Activated T-helper 2 cell treated with anti-CD3 and anti-CD28 coated beads, Interferon-gamma antibody, Interleukin-2, Interleukin-4, amounts not matched to agents 10 μg/mL and 5 μg/mL and 100 μg/mL, durations not matched to agents 14 hours and 24 hours and 36 hours (primary cell): ENCODE measurements at regions of chr15 and their contacts with region 1.

Region 1: GRCh38 chr15:63188926-63189871 is at the start of gene RAB8B:
- DNase-seq: peak; percentile 96
- H3K4me3 Mint-ChIP-seq: peak within 1 kb of the TSS; percentile 96
- H3K27ac Mint-ChIP-seq: peak within 1 kb of the TSS; percentile 90
- H3K4me1 Mint-ChIP-seq: peaks cover 40% of the 10 kb centered on the region
- H3K27me3 Mint-ChIP-seq: no peaks in the 10 kb centered on the region
- total RNA-seq, gene RAB8B: 214 TPM in 2 replicates

Region 2: GRCh38 chr15:63122002-63122893 is 67.0 kb before region 1 on chr15:
- intact Hi-C with region 1: loop called (anchors 1 kb)
- DNase-seq: peak; percentile 77
- H3K4me3 Mint-ChIP-seq: peak overlapping the region; percentile 91
- H3K27ac Mint-ChIP-seq: peak overlapping the region; percentile 47
- H3K4me1 Mint-ChIP-seq: peaks cover 8% of the 10 kb centered on the region
- H3K27me3 Mint-ChIP-seq: peaks cover 1% of the 10 kb centered on the region

Region 3: DNA sequence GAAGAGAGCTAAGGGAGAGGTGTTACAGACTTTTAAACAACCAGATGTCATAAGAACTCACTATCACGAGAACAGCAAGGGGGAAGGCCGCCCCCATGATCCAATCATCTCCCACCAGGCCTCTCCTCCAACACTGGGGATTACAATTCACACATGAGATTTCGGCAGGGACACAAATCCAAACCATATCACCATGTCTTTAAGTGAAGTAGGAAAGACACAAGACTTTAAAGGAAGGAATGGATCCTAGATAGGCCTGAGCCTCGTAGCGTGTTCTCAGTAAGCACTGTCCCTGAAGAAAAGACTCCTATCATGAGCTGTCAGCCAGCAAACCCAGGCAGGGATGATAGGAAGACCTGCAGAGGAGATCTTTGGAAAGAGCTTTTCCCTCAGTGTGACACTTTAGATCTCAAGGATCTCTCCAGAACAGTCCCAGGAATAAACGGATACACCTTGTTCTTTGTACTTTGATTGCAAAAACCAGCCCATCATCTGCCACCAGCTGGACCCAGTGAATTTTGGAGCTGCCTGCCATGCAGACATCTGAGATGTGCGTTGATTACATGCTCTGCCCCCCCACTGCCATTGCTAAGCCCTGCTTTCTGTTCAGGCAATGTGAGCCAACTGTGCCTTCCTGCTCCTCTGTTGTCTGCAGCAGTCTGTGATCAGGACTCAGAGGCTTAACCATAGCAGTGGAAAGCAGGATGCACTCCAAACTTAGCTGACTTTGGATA is 16.7 kb before region 1 on chr15:
- intact Hi-C with region 1: loop called (anchors 1 kb)
- DNase-seq: no peak
- H3K4me3 Mint-ChIP-seq: no peak overlapping the region
- H3K27ac Mint-ChIP-seq: no peak overlapping the region
- H3K4me1 Mint-ChIP-seq: peaks cover 9% of the 10 kb centered on the region
- H3K27me3 Mint-ChIP-seq: no peaks in the 10 kb centered on the region

Region 4: DNA sequence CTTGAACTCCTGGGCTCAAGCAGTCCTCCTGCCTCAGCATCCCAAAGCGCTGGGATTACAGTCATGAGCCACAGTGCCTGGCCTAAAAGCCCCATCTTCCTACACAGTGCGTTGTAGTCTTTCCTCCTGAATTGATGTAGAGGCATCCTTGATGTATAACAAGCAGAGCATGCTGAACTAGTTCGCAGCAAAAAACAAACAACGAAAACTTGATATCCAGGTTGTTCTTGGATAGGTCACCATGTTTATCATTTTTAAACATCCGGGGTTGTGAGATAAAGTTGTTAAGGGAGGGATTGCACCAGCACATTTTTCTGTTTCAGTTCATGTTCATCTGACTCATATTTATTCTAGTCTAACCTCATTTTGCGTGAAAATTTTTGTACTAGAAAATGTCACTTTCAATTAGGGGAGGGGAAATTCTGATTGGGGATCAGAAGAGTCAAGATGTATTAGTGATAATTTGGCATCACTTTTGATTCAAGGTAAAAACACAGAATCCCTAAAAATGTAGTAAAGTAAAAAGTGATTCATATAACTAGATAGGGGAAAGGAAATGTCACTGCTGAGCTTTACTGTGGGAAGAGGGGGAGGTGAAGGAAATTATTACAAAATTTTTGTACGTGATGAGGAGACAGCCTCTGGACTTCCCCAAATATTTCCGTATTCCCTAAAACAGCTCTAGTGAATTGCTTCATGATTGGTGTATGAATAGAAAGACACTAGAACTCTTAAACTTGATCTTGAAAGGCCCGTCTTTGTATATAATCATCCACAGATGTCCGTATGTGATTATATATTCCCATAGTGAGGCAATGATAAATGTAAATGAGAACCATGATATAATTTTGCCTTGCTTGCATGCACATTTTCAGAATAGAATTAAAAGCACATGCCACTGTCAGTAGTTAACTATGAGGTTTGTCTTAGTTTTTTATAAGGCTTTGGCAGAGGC is 23.1 kb after region 1 on chr15:
- intact Hi-C with region 1: loop called (anchors 1 kb)
- DNase-seq: no peak
- H3K4me3 Mint-ChIP-seq: peak overlapping the region; percentile 50
- H3K27ac Mint-ChIP-seq: peak overlapping the region; percentile 95
- H3K4me1 Mint-ChIP-seq: peaks cover 66% of the 10 kb centered on the region
- H3K27me3 Mint-ChIP-seq: no peaks in the 10 kb centered on the region

Region 5: GRCh38 chr15:63277038-63277892 is 88.1 kb after region 1 on chr15 and contains the start of gene APH1B:
- intact Hi-C with region 1: loop called (anchors 2 kb)
- DNase-seq: peak; percentile 77
- H3K4me3 Mint-ChIP-seq: peak within 1 kb of the TSS; percentile 87
- H3K27ac Mint-ChIP-seq: peak within 1 kb of the TSS; percentile 85
- H3K4me1 Mint-ChIP-seq: peaks cover 30% of the 10 kb centered on the region
- H3K27me3 Mint-ChIP-seq: no peaks in the 10 kb centered on the region
- total RNA-seq, gene APH1B: 9.5 and 9.8 TPM in 2 replicates

Region 6: GRCh38 chr15:63497642-63498467 is 308.7 kb after region 1 on chr15:
- intact Hi-C with region 1: loop called (anchors 5 kb)
- DNase-seq: peak; percentile 43
- H3K4me3 Mint-ChIP-seq: no peak overlapping the region
- H3K27ac Mint-ChIP-seq: no peak overlapping the region
- H3K4me1 Mint-ChIP-seq: peaks cover 61% of the 10 kb centered on the region
- H3K27me3 Mint-ChIP-seq: peaks cover 3% of the 10 kb centered on the region